HCT116 (cell line): ENCODE measurements at regions of chr7 and their contacts with region 1.

Region 1: GRCh38 chr7:21568762-21569161 is 25.9 kb downstream of the DNAH11 start:
- DNase-seq: no peak
- ATAC-seq: peak; percentile 67
- H3K4me3 ChIP-seq: no peak overlapping the region
- H3K27ac ChIP-seq: no peak overlapping the region
- H3K4me1 ChIP-seq: no peaks in the 10 kb centered on the region
- H3K27me3 ChIP-seq: no peaks in the 10 kb centered on the region
- CTCF ChIP-seq: peak; percentile 27 to 61 (median 43); a peak in 4 of 6 replicates
- POLR2A ChIP-seq: no peak
- RAD21 ChIP-seq: peak; percentile 61

Region 2: GRCh38 chr7:20783700-20784387 is 784.9 kb before region 1 on chr7:
- CTCF ChIA-PET with region 1: no interaction called
- POLR2A ChIA-PET with region 1: no interaction called
- RAD21 ChIA-PET with region 1: no interaction called
- intact Hi-C with region 1: loop called (anchors 5 kb)
- DNase-seq: no peak
- ATAC-seq: no peak
- H3K4me3 ChIP-seq: no peak overlapping the region
- H3K27ac ChIP-seq: no peak overlapping the region
- H3K4me1 ChIP-seq: peaks cover 2 to 12% of the 10 kb centered on the region in 2 experiments; a peak in 1 of 4 replicates
- H3K27me3 ChIP-seq: no peaks in the 10 kb centered on the region
- CTCF ChIP-seq: no peak
- POLR2A ChIP-seq: no peak
- RAD21 ChIP-seq: no peak

Region 3: DNA sequence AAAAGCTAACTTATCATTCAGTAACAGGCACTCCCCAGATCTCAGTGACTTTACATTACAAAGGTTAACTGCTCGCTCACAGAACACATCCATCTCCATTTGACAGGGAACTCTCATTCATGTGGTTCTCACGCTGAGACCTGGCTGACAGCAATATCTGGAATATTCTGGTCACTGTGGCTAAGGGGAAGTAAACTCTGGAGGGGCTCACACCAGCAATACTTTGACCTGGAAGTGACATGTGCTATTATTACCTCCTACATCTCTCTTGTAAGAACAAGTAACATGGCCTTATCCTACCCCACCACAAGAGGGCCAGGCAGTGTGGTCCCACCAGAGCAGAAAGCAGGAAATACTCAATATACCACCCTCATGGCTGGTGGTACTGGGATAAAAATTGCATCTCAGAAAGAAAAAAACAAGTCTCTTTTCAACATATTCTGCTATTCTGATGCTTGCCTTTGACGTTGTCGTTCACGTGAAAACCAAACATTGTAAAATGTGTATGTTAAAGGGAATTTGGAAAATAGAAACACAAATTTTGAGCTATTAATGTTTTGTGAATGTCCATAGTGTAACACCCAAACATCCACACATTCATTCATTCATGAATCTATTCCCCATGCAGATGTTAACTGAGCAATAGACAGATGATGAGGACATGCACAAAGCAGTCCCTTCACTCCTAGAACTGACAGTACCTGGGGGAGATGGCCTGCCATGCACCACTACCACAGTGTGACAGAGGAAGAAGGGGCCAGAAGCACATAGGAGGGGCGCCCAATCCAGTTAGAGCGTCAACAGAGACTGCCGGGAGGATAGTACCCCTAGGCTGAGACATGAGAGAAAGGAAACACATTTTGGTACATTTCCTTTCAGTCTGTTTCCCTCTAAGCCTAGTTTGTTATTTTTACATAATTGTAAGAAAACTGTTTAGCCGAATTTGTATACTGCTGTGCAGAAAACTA is 306.9 kb before region 1 on chr7:
- CTCF ChIA-PET with region 1: interaction called, 11 read pairs
- POLR2A ChIA-PET with region 1: no interaction called
- RAD21 ChIA-PET with region 1: no interaction called
- intact Hi-C with region 1: loop called (anchors 5 kb)
- DNase-seq: peak; percentile 44
- ATAC-seq: peak; percentile 98
- H3K4me3 ChIP-seq: no peak overlapping the region
- H3K27ac ChIP-seq: no peak overlapping the region
- H3K4me1 ChIP-seq: no peaks in the 10 kb centered on the region
- H3K27me3 ChIP-seq: no peaks in the 10 kb centered on the region
- CTCF ChIP-seq: peak; percentile 69 to 79 (median 74)
- POLR2A ChIP-seq: no peak
- RAD21 ChIP-seq: peak; percentile 68

Region 4: DNA sequence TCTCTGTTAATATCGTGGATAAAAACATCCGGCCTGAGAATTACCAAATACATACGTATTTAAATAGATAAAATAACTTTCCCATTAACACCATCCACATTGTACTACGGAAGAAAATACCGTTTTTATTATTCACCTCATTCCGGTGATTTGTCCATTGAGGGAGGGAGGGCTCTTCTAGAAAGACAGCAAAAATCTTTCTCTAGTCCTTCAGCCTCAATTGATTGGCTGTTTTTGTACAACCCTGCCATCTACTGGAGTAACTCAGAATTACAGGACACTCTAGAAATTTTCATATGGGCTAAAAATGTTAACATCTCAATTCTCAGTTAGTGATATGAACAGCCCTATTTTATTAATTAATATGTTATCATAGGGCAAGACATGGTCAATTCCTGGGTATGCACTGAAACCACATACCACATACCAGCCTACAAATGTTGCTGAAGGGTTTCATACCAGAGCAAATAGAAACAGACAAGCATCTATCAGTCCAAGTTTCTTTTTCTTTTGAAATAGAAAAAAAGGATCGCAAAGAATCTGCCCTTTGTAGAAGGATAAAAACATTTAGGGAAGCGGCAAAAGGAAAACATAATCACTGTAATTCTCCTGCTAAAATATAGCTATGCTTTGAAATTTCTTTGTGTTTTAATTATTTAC is 432.7 kb after region 1 on chr7:
- CTCF ChIA-PET with region 1: no interaction called
- POLR2A ChIA-PET with region 1: no interaction called
- RAD21 ChIA-PET with region 1: no interaction called
- intact Hi-C with region 1: loop called (anchors 1 kb)
- DNase-seq: peak; percentile 36
- ATAC-seq: peak; percentile 92
- H3K4me3 ChIP-seq: no peak overlapping the region
- H3K27ac ChIP-seq: no peak overlapping the region
- H3K4me1 ChIP-seq: 0 out of 4 replicates have a peak, but pooled peaks cover 0 to 3% of the 10 kb centered on the region in 2 experiments
- H3K27me3 ChIP-seq: peaks cover 6% of the 10 kb centered on the region; the same call in 1 of the 2 replicates
- CTCF ChIP-seq: peak; percentile 57 to 80 (median 70); a peak in 5 of 6 replicates
- POLR2A ChIP-seq: no peak
- RAD21 ChIP-seq: peak; percentile 91